SK-N-SH (cell line): ENCODE measurements at regions of chr1 and their contacts with region 1.

Region 1: DNA sequence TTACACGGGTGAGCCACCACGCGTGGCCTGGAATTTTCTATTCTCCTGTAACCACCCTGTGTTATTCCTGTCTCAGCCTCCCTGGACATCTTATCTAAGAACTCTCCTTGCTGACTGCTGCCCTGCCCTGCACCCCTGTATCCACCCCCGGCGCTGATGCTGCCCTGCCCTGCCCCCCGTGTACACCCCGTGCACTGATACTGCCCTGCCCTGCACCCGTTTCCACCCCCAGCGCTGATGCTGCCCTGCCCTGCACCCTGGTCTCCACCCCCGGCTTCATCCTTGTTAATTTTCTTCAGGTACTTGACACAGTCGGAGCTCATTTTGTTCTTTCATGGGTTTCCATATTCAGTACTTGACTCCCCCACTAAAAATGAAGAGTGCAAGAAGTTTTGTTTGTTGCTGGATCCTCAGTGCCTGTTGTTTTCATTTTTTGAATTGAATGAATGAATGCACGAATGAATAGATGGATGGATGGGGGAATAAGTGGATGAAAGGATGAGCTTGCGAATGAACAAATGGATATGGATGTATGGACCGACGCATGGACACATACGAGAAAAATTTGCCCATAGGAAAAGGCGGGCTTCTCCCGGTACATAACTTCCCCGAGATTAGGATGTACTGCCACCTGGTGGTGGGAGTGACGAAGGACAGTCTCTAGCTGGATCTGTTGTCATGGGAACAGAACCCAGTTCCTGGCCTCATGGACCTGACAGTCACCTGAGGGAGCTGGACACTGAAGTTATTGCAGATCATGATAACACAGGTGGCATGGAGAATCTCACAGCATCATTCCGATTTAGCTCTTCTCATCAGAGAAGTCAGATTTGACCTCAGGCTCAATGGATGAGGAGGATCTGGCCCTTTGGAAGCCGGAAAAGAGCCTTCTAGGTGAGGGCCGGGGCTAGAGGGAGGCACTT is 14.9 kb downstream of the AADACL4 start:
- DNase-seq: peak; percentile 89
- H3K4me3 ChIP-seq: peak overlapping the region in 1 of 2 experiments; percentile 34; a peak in 1 of 4 replicates
- H3K27ac ChIP-seq: no peak overlapping the region
- H3K4me1 ChIP-seq: no peaks in the 10 kb centered on the region
- H3K27me3 ChIP-seq: no peaks in the 10 kb centered on the region
- CTCF ChIP-seq: peak; percentile 89
- EP300 ChIP-seq: no peak
- RAD21 ChIP-seq: peak; percentile 94

Region 2: GRCh38 chr1:12275369-12275768 is 383.4 kb before region 1 on chr1:
- CTCF ChIA-PET with region 1: interaction called, 31 read pairs
- POLR2A ChIA-PET with region 1: no interaction called
- DNase-seq: peak; percentile 37
- H3K4me3 ChIP-seq: no peak overlapping the region; a peak in 1 of 4 replicates
- H3K27ac ChIP-seq: no peak overlapping the region
- H3K4me1 ChIP-seq: no peaks in the 10 kb centered on the region
- H3K27me3 ChIP-seq: no peaks in the 10 kb centered on the region
- CTCF ChIP-seq: peak; percentile 70
- EP300 ChIP-seq: no peak
- RAD21 ChIP-seq: peak; percentile 57

Region 3: GRCh38 chr1:12314333-12314903 is 344.4 kb before region 1 on chr1:
- CTCF ChIA-PET with region 1: interaction called, 35 read pairs
- POLR2A ChIA-PET with region 1: no interaction called
- DNase-seq: peak; percentile 28
- H3K4me3 ChIP-seq: no peak overlapping the region
- H3K27ac ChIP-seq: no peak overlapping the region; a peak in 1 of 4 replicates
- H3K4me1 ChIP-seq: no peaks in the 10 kb centered on the region; a peak in 2 of 4 replicates
- H3K27me3 ChIP-seq: no peaks in the 10 kb centered on the region
- CTCF ChIP-seq: peak; percentile 75
- EP300 ChIP-seq: no peak
- RAD21 ChIP-seq: peak; percentile 77

Region 4: GRCh38 chr1:12640237-12640957 is 18.4 kb before region 1 on chr1:
- CTCF ChIA-PET with region 1: interaction called, 37 read pairs
- POLR2A ChIA-PET with region 1: no interaction called
- DNase-seq: no peak
- H3K4me3 ChIP-seq: no peak overlapping the region
- H3K27ac ChIP-seq: no peak overlapping the region
- H3K4me1 ChIP-seq: no peaks in the 10 kb centered on the region
- H3K27me3 ChIP-seq: no peaks in the 10 kb centered on the region; the same call in 1 of the 2 replicates
- CTCF ChIP-seq: no peak
- EP300 ChIP-seq: no peak
- RAD21 ChIP-seq: no peak